GM13977 (cell line): ENCODE measurements at regions of chr13 and their contacts with region 1.

Region 1: DNA sequence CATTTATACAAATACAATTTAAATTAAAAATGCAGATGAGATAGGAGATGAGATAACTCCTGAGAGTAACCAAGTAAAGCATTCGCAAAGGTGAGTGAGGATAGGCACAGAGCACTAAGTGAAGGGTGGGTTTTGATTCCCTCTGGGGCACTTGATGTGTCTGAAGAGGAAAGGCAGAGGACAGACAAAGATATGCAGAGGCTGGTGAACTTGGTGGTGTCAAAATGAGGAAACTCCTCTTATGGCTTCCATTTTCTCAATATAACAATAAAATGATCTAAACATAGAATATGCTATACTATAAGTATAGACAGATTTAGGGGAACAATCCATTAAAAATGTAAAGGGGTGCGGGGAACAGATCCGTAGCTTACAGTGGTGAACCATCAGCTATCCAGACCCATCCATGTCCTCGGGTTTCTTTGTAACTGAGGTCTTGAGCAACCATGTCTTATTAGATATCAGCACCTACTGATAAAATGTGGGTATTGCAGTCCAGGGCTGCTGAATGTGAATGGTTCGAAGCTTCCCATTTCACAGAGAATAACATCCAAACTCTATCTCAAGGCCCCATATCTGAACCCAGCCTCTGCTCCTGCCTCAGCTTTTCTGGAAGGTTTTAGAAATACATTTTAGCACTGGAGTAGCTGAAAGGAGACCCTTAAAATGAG is 73.9 kb upstream of the SLC10A2 start:
- DNase-seq: peak; percentile 61
- CTCF ChIP-seq: peak; percentile 92

Region 2: DNA sequence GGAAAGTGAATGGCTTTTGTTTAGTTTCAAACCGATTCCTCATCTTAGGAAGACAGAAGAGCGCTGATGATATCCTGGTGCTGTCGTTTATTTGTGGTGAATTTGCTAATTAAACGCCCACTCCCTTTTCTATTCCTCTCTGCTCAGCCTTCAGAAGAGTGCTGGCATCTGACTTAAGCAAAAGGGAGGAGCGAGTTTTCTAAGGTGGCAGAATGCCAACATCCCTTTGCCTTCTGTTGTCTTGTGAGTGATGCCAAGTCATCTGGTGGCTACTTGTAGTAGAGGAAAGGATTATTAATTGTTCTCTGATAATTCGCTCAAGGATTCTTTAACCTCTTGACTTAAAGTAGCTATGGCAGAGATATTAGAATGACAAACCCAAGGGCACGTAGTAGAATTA is 226.2 kb before region 1 on chr13:
- in situ Hi-C with region 1: loop called (anchors 10 kb)
- DNase-seq: no peak
- CTCF ChIP-seq: no peak

Region 3: GRCh38 chr13:103663996-103664395 is 523.9 kb after region 1 on chr13:
- in situ Hi-C with region 1: no loop called
- DNase-seq: no peak
- CTCF ChIP-seq: no peak